MCF 10A (cell line): ENCODE measurements at regions of chr3 and their contacts with region 1.

Region 1: DNA sequence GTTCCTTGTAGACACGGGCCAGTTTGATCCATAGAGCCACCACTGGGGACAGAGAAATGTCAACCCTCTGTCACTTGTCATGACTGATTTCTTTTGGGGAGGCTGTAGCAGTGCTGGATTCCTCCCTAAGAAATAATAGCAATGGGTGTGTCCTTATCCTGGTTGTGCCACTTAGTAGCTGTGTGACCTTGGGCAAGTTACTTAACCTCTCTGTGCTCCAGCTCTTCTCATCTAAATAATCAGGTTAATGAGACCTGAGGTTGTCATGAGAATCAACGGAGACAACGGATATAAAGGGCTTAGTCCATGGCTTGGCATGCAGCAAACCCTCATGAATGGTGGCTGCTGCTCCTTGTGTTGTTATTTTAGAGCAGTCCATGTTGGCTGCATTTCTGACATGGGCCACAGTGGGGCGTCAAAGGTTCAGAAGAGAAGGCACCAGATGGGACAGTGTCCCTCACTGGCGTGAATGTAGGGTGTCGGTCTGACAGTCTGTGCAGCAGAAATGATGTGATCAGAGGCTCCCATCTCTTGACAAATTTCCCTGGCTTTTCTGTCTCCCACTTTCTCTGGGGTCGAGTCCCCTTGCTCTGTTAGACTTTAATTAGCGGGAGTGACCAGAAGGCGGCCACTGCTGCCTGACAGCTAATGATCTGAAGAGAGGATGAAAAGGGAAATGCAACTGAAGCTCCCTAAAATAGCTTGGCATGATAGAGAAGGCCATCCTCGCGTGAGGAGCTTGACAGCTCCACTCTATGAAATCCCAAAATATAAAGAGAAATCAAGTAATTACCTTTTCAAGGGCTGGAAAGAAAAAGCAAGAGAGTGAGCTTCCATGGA is 209.4 kb downstream of the CADPS start:
- DNase-seq: peak; percentile 85
- H3K4me3 Mint-ChIP-seq: no peak overlapping the region
- H3K27ac Mint-ChIP-seq: no peak overlapping the region
- H3K4me1 Mint-ChIP-seq: peaks cover 7% of the 10 kb centered on the region
- H3K27me3 Mint-ChIP-seq: no peaks in the 10 kb centered on the region
- CTCF ChIP-seq: peak; percentile 86

Region 2: DNA sequence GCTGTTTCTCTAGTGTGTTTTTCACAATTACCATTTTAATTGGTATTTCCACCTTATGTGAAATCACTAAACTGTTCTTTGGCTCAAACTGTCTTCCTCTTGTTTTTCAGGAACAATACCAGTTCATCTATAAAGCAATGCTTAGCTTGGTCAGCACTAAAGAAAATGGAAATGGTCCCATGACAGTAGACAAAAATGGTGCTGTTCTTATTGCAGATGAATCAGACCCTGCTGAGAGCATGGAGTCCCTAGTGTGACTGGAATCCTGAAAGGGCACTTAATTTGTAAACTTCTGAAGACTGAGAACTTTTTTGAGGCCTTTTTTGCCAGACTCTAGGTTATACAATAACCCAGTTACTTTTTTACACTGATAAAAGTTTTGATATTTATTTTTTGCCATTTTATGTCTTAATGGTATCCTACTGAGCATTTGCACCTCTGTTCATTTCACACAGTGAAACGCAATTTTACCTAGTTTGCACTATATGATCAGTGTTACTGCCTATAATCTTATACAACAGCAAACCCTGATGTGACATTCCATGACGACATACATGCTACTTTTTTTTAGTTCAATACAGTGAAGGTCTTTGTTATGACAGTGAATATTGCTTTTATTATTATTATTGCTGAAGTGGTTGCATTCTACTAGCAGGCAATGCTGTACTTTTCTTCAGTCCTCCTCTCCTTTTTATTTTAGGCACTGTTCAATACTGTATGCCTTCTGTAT is 372.6 kb before region 1 on chr3:
- CTCF ChIA-PET with region 1: no interaction called
- POLR2A ChIA-PET with region 1: no interaction called
- intact Hi-C with region 1: no loop called
- DNase-seq: no peak
- H3K4me3 Mint-ChIP-seq: no peak overlapping the region
- H3K27ac Mint-ChIP-seq: no peak overlapping the region
- H3K4me1 Mint-ChIP-seq: no peaks in the 10 kb centered on the region
- H3K27me3 Mint-ChIP-seq: no peaks in the 10 kb centered on the region
- CTCF ChIP-seq: no peak

Region 3: DNA sequence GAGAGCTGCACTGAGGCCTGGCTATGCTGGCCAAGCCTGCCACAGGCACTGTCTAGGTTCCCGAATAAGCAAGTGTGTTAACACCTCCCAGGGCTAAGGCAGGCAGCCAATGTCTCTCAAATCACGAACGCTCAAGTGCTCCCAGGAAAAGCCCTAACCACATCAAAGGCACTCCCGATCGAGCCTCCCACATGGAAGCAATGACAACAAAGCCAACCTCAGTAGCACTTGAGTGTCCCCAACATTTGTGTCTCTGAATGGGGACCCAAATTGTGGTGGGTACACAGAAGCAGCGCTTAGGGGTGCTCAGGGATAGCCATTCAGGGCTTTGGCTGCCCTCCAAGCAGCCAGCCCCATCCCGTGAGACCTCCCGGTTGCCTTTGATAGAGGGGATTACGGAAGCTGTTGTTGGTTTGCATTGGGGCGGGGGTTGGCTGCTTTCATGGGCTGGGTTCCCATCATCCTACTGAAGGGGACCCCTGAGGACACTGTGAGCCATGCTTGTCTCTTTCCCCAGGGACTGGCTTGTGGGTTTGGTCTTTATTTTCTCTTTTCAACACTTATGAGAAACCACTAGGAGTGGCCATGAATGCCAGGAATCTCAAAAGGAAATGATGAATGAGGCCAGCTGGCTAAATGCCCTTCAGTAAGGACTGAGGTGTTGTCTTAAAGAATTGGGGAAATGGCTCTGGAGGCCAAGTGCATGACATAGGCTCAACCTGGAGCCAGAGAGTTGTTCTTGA is 58.4 kb before region 1 on chr3:
- CTCF ChIA-PET with region 1: interaction called, 11 read pairs
- POLR2A ChIA-PET with region 1: no interaction called
- intact Hi-C with region 1: no loop called
- DNase-seq: peak; percentile 98
- H3K4me3 Mint-ChIP-seq: peak overlapping the region; percentile 44
- H3K27ac Mint-ChIP-seq: peak overlapping the region; percentile 82
- H3K4me1 Mint-ChIP-seq: peaks cover 60% of the 10 kb centered on the region
- H3K27me3 Mint-ChIP-seq: no peaks in the 10 kb centered on the region
- CTCF ChIP-seq: no peak

Region 4: GRCh38 chr3:62638316-62638715 is 27.5 kb before region 1 on chr3:
- CTCF ChIA-PET with region 1: interaction called, 14 read pairs
- POLR2A ChIA-PET with region 1: no interaction called
- intact Hi-C with region 1: no loop called
- DNase-seq: no peak
- H3K4me3 Mint-ChIP-seq: no peak overlapping the region
- H3K27ac Mint-ChIP-seq: no peak overlapping the region
- H3K4me1 Mint-ChIP-seq: peaks cover 6% of the 10 kb centered on the region
- H3K27me3 Mint-ChIP-seq: no peaks in the 10 kb centered on the region
- CTCF ChIP-seq: no peak

Region 5: DNA sequence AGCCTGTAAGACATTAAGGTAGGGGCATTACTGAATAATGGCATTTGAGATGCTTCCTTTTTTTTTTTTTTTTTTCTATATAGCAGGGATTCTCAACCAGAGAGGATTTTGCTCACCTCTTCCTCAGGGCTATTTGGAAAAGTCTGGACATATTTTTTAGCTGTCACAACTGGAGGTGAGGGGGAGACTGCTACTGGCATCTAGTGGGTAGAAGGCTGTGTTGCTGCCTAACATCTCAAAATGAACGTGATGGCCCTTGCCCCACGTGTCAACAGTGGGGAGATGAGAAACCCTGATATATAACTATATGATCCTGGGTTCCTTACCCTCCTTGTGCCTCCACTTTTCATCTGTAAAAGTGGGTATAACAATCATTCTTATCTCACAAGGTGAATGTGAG is 137.5 kb after region 1 on chr3:
- CTCF ChIA-PET with region 1: interaction called, 6 read pairs
- POLR2A ChIA-PET with region 1: no interaction called
- intact Hi-C with region 1: loop called (anchors 1 kb)
- DNase-seq: peak; percentile 16
- H3K4me3 Mint-ChIP-seq: no peak overlapping the region
- H3K27ac Mint-ChIP-seq: no peak overlapping the region
- H3K4me1 Mint-ChIP-seq: no peaks in the 10 kb centered on the region
- H3K27me3 Mint-ChIP-seq: no peaks in the 10 kb centered on the region
- CTCF ChIP-seq: no peak

Region 6: DNA sequence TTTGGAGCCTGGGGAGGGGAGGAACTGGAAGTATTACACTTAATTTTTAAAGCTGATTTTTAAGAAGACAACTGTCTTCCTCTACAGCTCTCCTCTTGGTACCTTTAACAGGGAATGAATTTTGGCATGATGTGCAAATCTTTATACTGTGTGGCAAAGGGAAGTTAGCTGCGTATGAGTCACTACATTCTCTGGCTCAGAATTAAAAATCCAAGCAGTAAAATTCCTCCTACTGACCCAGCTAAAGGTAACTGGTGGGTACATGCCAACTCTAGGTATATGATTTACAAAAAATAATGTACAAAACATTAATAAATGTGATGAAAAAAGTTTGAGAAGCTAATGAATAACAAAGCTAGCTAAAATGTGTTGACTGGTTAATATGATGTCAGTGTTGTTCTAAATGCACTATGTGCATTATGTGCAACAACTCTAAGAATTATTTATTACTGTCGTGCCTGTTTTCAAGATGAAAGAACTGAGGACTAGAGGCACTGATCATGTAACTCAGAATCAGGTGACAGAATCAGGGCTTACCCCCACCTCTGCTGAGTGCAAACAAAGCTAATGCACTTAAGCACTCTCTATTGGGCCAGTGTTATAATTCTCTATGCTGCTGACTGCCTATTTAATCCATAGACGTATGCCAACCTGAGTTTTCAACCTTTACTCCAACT is 404.1 kb after region 1 on chr3:
- CTCF ChIA-PET with region 1: interaction called, 13 read pairs
- POLR2A ChIA-PET with region 1: no interaction called
- intact Hi-C with region 1: no loop called
- DNase-seq: no peak
- H3K4me3 Mint-ChIP-seq: no peak overlapping the region
- H3K27ac Mint-ChIP-seq: no peak overlapping the region
- H3K4me1 Mint-ChIP-seq: no peaks in the 10 kb centered on the region
- H3K27me3 Mint-ChIP-seq: peaks cover 45% of the 10 kb centered on the region
- CTCF ChIP-seq: no peak

Region 7: DNA sequence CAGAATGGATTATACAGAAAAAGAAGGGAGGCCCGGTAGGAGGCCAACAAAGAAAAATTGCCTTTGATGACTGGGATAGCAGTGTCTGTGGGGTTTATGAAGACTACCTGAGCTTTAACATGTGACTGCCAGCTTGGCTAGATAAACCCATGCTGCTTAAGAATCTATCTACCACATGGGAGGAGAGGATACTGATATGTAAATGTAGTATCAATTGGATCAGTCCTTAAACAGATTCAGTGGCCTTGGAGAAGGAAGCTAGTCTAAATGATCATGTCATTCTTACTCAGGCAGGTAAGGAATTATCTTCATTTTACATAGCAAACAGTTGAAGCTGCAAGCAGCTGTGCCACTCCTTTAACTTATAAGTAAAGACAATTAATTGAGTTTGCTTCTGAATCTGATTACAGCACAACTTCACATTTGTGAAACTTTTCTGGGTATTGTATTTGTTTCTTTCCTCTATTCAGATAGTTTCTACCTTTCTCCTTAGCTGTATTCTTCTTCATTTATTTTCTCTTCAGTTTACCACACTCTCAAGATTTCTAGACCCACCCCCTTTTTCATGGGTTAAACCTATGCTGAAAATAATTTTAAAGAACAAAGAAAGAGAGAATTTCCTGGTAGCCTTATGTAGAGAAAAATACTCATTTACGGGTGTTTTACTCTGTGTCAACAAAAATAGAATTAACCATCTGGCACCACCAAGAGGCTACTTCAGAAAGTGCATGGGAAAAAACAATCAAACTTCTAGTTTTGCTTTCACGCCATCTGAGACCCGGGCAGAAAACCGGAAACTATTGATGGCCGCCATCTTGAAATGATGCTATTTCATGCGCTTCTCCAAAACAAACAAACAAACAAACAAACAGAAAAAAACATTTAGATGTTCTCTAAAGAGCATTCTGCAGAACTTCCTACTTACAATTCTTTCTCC is 562.5 kb after region 1 on chr3:
- CTCF ChIA-PET with region 1: interaction called, 339 read pairs
- POLR2A ChIA-PET with region 1: interaction called, 4 read pairs
- intact Hi-C with region 1: loop called (anchors 1 kb)
- DNase-seq: peak; percentile 60
- H3K4me3 Mint-ChIP-seq: no peak overlapping the region
- H3K27ac Mint-ChIP-seq: peak overlapping the region; percentile 59
- H3K4me1 Mint-ChIP-seq: peaks cover 12% of the 10 kb centered on the region
- H3K27me3 Mint-ChIP-seq: peaks cover 21% of the 10 kb centered on the region
- CTCF ChIP-seq: peak; percentile 57

Region 8: DNA sequence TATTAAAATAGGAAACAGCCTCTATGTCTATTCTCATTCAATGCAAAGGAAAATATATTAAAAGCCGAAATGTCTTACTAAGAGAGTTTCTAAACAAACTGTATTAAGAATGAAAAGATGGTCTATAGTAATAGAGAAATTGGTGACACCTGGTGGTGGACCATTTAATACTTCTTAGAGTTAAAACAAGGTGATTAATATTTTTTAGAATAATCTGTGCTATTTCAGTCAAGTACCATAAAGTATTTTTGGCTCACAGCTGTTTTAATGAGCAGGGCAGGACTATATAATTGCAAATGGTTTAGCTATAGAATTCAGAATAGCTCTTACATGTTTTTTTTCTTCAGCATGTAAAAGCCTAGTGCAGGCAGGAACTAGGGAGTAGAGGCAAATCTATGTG is 668.0 kb after region 1 on chr3:
- CTCF ChIA-PET with region 1: interaction called, 10 read pairs
- POLR2A ChIA-PET with region 1: no interaction called
- intact Hi-C with region 1: no loop called
- DNase-seq: peak; percentile 16
- H3K4me3 Mint-ChIP-seq: no peak overlapping the region
- H3K27ac Mint-ChIP-seq: no peak overlapping the region
- H3K4me1 Mint-ChIP-seq: no peaks in the 10 kb centered on the region
- H3K27me3 Mint-ChIP-seq: peaks cover 70% of the 10 kb centered on the region
- CTCF ChIP-seq: peak; percentile 23

Region 9: DNA sequence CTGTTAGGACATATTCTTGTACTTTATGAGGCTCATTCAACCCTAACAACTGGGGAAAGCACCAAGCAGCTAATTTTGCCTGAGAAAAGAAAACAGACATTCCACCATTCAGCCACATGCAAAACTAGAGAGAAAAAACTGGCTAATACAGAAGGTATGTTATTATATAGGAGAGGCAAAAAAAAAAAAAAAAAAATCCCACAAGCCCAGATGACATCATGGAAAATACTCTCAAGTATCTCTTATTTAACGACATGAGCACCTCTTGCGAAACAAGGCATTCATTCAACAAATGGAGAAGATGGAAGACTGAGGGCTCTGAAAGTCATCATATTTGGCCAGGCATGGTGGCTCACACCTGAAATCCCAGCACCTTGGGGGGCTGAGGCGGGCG is 1497.9 kb after region 1 on chr3:
- CTCF ChIA-PET with region 1: no interaction called
- POLR2A ChIA-PET with region 1: no interaction called
- intact Hi-C with region 1: no loop called
- DNase-seq: peak; percentile 85
- H3K4me3 Mint-ChIP-seq: peak overlapping the region; percentile 25
- H3K27ac Mint-ChIP-seq: peak overlapping the region; percentile 87
- H3K4me1 Mint-ChIP-seq: peaks cover 48% of the 10 kb centered on the region
- H3K27me3 Mint-ChIP-seq: no peaks in the 10 kb centered on the region
- CTCF ChIP-seq: no peak